Activated naive CD4-positive, alpha-beta T cell treated with anti-CD3 and anti-CD28 coated beads, Interleukin-2, amount 10 ng/mL, durations not matched to agents 7 days and 5 days (primary cell): ENCODE measurements at regions of chr11 and their contacts with region 1.

Region 1: GRCh38 chr11:113305440-113306336 is 8.7 kb upstream of the TTC12 start:
- DNase-seq: peak; percentile 81
- H3K4me3 Mint-ChIP-seq: no peak overlapping the region
- H3K27ac Mint-ChIP-seq: no peak overlapping the region
- H3K4me1 Mint-ChIP-seq: no peaks in the 10 kb centered on the region
- H3K27me3 Mint-ChIP-seq: no peaks in the 10 kb centered on the region

Region 2: GRCh38 chr11:113106507-113106906 is 199.2 kb before region 1 on chr11:
- CTCF ChIA-PET with region 1: no interaction called
- DNase-seq: no peak
- H3K4me3 Mint-ChIP-seq: no peak overlapping the region
- H3K27ac Mint-ChIP-seq: no peak overlapping the region
- H3K4me1 Mint-ChIP-seq: no peaks in the 10 kb centered on the region
- H3K27me3 Mint-ChIP-seq: no peaks in the 10 kb centered on the region

Region 3: GRCh38 chr11:113153847-113154246 is 151.8 kb before region 1 on chr11:
- CTCF ChIA-PET with region 1: no interaction called
- DNase-seq: no peak
- H3K4me3 Mint-ChIP-seq: no peak overlapping the region
- H3K27ac Mint-ChIP-seq: no peak overlapping the region
- H3K4me1 Mint-ChIP-seq: no peaks in the 10 kb centered on the region
- H3K27me3 Mint-ChIP-seq: no peaks in the 10 kb centered on the region

Region 4: DNA sequence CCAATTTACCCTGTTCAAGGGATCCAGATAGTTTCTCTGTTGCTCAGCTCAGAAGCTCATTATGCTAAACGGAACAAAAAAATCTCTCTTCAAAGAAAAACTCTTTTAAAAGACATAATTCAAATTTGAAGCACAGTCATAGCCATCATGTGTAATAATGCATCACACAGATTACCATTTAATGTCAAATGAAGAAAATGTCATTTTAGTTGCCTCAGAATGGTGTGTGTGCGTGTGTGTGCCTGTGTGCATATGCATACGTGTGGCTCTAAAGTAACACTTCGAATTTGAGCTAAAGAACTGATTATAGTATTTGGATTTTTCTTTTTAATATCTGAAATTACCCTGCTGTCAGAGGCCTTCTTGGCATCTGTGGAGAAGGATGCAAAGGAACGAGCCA is 18.6 kb after region 1 on chr11:
- CTCF ChIA-PET with region 1: interaction called, 10 read pairs
- DNase-seq: no peak
- H3K4me3 Mint-ChIP-seq: no peak overlapping the region
- H3K27ac Mint-ChIP-seq: no peak overlapping the region
- H3K4me1 Mint-ChIP-seq: no peaks in the 10 kb centered on the region
- H3K27me3 Mint-ChIP-seq: no peaks in the 10 kb centered on the region

Region 5: GRCh38 chr11:113376156-113376555 is 70.5 kb after region 1 on chr11:
- CTCF ChIA-PET with region 1: no interaction called
- DNase-seq: no peak
- H3K4me3 Mint-ChIP-seq: no peak overlapping the region
- H3K27ac Mint-ChIP-seq: no peak overlapping the region
- H3K4me1 Mint-ChIP-seq: no peaks in the 10 kb centered on the region
- H3K27me3 Mint-ChIP-seq: no peaks in the 10 kb centered on the region

Region 6: GRCh38 chr11:113436672-113437252 is 131.1 kb after region 1 on chr11:
- CTCF ChIA-PET with region 1: no interaction called
- DNase-seq: no peak
- H3K4me3 Mint-ChIP-seq: no peak overlapping the region
- H3K27ac Mint-ChIP-seq: no peak overlapping the region
- H3K4me1 Mint-ChIP-seq: no peaks in the 10 kb centered on the region
- H3K27me3 Mint-ChIP-seq: peaks cover 14% of the 10 kb centered on the region

Region 7: GRCh38 chr11:113532697-113533424 is 227.2 kb after region 1 on chr11:
- CTCF ChIA-PET with region 1: interaction called, 11 read pairs
- DNase-seq: peak; percentile 71
- H3K4me3 Mint-ChIP-seq: no peak overlapping the region
- H3K27ac Mint-ChIP-seq: no peak overlapping the region
- H3K4me1 Mint-ChIP-seq: no peaks in the 10 kb centered on the region
- H3K27me3 Mint-ChIP-seq: peaks cover 20% of the 10 kb centered on the region

Region 8: GRCh38 chr11:113796663-113797259 is 491.1 kb after region 1 on chr11:
- CTCF ChIA-PET with region 1: interaction called, 13 read pairs
- DNase-seq: no peak
- H3K4me3 Mint-ChIP-seq: no peak overlapping the region
- H3K27ac Mint-ChIP-seq: no peak overlapping the region
- H3K4me1 Mint-ChIP-seq: no peaks in the 10 kb centered on the region
- H3K27me3 Mint-ChIP-seq: no peaks in the 10 kb centered on the region